Activated CD8-positive, alpha-beta T cell treated with anti-CD3 and anti-CD28 coated beads for 36 hours (primary cell): ENCODE measurements at regions of chr1 and their contacts with region 1.

Region 1: DNA sequence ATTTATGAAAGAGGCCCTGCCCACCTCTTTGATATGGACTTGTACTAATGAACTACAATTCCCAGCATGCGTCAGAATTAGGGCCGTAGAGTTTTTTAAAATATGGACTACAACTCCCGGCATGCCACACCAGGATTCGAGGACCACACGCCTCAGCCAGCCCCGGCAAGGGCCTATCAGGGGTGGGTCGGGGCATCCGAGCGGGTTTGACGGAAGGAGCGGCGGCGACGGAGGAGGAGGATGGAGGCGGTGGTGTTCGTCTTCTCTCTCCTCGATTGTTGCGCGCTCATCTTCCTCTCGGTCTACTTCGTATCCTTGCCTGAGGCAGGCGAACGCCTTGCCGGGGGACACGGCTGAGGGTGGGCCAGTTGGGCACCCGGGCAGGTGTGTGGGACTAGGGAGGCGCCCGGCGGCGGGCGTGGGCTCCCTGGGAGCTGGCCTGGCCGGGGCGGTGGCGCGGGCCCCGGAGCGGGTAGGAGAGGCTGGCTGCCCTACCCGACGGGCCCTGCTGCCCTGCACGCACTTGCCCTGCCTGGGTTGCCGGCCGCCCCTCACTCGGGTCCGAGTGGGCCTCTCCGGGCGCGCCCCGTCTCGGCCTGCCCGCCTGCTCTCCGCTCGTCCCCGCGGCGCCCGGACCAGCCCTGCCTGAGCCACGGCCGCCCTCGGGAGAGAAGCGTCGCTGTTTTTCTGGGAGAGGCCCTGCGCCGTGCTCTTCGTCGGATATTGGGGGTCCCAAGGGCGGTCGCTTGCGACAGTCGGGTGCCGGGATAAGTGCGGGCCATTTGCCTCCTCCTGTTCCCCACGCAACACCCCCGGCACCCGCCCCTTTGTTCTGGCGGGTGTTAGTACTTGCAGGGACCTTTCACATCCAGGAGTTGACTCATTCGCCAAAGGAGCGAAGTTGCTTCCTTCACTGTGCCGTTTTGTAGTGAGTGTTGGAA is at the start of gene CNIH4:
- DNase-seq: peak; percentile 94
- ATAC-seq: peak; percentile 98
- H3K4me3 Mint-ChIP-seq: peak within 1 kb of the TSS; percentile 77
- H3K27ac Mint-ChIP-seq: peak within 1 kb of the TSS; percentile 90
- H3K4me1 Mint-ChIP-seq: peaks cover 42% of the 10 kb centered on the region
- H3K27me3 Mint-ChIP-seq: no peaks in the 10 kb centered on the region
- CTCF ChIP-seq: no peak
- total RNA-seq, gene CNIH4: 44.8 to 45.1 TPM

Region 2: DNA sequence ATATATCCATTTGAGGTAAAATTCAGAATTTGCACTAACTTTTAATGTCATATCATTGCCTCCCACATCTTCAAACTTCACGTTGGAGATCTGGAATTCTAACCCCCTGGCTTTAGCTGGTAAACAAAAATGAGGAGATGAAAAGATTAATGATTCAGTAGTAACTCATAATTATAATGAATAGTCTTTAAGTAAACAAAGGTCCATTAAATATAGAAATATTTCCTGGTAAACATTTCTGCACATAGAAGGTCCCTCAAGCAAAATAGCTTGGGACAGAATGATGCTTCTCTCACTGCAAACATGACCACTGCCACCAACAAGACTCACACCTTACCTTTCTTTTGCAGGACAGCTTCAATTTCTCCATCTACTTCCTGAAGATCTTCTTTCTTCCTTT is 52.3 kb before region 1 on chr1:
- CTCF ChIA-PET with region 1: no interaction called
- POLR2A ChIA-PET with region 1: no interaction called
- intact Hi-C with region 1: no loop called
- DNase-seq: no peak
- ATAC-seq: no peak
- H3K4me3 Mint-ChIP-seq: no peak overlapping the region
- H3K27ac Mint-ChIP-seq: no peak overlapping the region
- H3K4me1 Mint-ChIP-seq: no peaks in the 10 kb centered on the region
- H3K27me3 Mint-ChIP-seq: no peaks in the 10 kb centered on the region
- CTCF ChIP-seq: no peak

Region 3: DNA sequence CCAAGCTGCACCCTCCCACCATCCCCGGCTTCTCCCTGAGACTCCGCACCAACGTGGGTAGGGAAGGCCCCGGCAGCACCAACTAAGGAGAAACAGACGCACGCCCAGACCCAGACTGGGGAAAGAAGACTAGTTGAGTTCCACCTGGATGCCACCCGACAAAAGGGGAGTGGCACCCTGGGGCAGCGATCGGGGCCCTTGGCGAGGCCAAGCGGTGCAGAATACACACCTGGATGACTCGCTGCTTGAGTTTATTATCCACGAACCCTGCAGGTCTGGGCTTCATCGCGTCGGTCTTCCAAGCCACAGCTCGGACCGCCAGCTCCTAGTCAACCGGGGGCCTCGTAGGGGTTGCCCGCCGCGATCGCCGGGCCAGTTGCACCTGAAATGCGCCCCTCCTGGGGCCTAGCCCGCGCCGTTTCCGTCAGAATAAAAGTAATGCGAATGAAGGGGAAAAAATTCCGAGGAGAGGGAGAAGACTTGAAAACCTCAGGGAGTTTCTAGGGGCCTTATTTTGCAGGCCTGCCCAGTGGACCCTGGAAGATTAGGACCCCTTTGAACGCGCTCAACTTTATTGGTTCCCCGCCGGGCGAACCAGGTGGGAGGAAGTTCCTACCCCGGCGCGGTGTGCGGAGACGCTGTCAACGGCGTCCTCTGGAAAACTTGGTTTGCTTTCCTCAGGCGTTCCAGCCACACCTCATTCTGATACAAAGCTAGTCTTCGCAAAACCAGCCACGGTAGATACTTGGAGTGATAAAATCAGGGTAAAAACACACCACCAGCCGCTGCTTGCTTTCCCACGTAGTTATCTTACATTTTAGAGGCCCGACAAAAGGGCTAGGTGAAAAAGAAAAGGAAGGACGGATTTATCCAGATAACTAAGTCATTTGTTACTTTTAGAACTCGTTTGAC is 26.9 kb before region 1 on chr1 and contains the start of gene NVL:
- CTCF ChIA-PET with region 1: interaction called, 12 read pairs
- POLR2A ChIA-PET with region 1: interaction called, 3 read pairs
- intact Hi-C with region 1: no loop called
- DNase-seq: peak; percentile 85
- ATAC-seq: peak; percentile 88
- H3K4me3 Mint-ChIP-seq: peak within 1 kb of the TSS; percentile 88
- H3K27ac Mint-ChIP-seq: peak within 1 kb of the TSS; percentile 99
- H3K4me1 Mint-ChIP-seq: peaks cover 40% of the 10 kb centered on the region
- H3K27me3 Mint-ChIP-seq: no peaks in the 10 kb centered on the region
- CTCF ChIP-seq: no peak
- total RNA-seq, gene NVL: 37.7 to 40.4 TPM

Region 4: DNA sequence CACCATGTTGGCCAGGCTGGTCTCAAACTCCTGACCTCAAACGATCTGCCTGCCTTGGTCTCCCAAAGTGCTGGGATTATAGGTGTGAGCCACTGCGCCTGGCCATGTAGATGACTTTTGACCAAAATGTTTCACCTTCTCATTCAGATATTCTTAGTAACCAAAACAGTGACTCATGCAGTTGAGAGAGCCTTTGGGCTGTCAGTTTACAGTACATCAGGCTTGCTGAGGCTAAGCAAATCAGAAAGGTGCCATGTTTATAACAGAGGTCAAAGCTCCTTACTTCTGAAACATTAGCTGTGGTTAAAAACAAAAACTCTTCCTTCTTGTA is 20.7 kb after region 1 on chr1:
- CTCF ChIA-PET with region 1: interaction called, 7 read pairs
- POLR2A ChIA-PET with region 1: interaction called, 14 read pairs
- intact Hi-C with region 1: loop called (anchors 2 kb)
- DNase-seq: peak; percentile 71
- ATAC-seq: peak; percentile 65
- H3K4me3 Mint-ChIP-seq: no peak overlapping the region
- H3K27ac Mint-ChIP-seq: peak overlapping the region; percentile 75
- H3K4me1 Mint-ChIP-seq: peaks cover 92% of the 10 kb centered on the region
- H3K27me3 Mint-ChIP-seq: no peaks in the 10 kb centered on the region
- CTCF ChIP-seq: no peak